Right ventricle myocardium superior (tissue), 1 donor: ENCODE measurements at regions of chr18 and their contacts with region 1.

Region 1: DNA sequence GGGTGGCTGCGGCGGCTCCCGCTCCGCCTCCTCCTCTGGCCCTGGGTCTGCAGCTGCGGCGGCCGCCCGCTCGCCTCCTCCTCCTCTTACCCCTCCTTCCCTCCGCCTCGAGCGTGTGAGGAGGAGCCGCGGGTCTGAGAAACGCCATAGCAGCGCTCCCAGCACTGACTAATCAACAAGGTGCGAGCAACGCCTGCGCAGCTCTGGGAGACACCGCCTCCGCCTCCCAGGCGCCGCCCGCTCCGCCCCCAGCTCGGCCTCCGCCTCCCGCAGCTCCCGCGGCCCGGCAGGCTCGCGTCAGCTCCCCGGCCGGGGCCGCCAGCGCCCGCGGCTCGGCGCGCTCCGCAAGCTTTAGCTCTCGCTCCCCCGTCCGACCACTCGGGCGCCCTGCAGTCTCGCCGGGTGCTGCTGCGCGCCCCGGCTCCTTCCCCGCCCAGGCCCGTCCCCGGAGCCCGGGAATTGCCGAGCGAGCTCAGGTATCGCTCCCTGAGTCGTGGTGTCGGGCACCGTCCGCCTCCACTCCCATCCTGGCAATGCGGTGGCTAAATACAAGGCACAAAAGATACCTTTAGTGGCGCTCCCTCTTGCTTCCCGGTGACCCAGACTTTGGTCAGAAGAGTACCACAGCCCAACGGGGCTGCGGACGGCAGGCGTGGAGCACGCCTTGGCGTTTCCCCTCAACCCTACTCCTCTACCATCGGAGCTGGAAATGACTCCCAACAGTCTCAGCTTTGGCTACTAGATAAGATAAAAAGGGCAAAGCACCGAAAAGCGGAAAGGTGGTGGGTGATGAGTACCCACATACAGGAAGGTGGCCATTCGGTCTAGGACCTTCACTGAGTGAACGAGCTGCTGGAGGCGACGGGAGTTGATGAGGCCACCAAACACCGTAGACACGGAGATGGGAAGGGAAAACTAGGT is at the start of gene GAREM1:
- DNase-seq: peak; percentile 97
- ATAC-seq: peak; percentile 96
- total RNA-seq, gene GAREM1: 23.5 TPM

Region 2: DNA sequence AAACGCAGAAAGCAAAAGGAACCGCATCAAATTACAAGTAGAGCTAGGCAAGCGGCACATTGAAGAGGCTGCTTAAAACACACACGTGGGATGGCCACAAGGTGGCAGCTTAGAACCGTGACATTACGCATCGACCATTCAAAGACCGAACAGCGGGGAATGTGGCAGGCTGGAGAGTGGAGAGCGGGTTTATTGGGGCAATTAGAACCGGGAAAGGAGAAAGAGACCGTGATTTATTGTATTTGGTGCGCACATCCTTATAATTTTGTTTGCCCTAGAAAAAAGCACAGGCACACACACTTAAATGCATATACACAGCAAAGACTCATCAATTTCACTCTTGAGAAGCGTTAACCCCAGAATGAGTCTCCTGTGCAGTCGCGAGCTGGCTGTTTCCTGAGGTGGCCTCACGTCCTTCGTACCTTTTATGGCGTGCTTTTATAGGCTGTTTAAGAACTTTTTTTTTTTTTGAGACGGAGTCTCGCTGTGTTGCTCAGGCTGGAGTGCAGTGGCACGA is 312.8 kb before region 1 on chr18:
- intact Hi-C with region 1: loop called (anchors 10 kb)
- DNase-seq: peak; percentile 80
- ATAC-seq: peak; percentile 100

Region 3: GRCh38 chr18:32271672-32272208 is 199.2 kb before region 1 on chr18:
- intact Hi-C with region 1: loop called (anchors 5 kb)
- DNase-seq: no peak
- ATAC-seq: peak; percentile 84

Region 4: DNA sequence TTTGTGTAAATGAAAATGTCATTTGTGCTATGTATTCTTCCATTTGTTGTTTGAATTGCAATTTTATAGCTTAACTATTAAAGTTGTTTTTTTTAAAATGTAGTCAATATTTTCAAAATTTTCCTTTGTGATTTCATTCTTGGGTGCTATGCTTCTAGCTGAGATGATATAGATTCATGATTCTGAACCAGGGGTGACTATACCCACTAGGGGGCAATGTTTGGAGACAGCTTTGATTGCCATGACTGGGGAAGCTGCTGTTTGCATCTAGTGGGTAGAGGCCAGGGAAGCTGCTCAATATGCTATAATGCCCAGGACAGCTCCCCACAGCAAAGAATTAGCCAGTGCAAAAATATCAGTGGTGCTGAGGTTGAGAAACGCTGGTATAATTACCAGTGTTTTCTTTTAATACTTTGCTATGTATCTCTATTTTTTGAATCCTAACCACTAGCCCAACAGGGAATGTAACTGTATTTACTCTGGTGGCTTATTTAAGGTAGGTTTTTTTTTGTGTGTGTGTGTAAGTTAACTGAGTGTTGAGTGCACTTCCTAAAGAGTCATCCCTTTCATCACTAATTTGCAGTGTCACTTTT is 181.4 kb before region 1 on chr18:
- intact Hi-C with region 1: loop called (anchors 5 kb)
- DNase-seq: no peak
- ATAC-seq: peak; percentile 77

Region 5: GRCh38 chr18:32349728-32350395 is 121.1 kb before region 1 on chr18:
- intact Hi-C with region 1: loop called (anchors 10 kb)
- DNase-seq: peak; percentile 48
- ATAC-seq: peak; percentile 76